SK-N-SH (cell line): ENCODE measurements at regions of chr20 and their contacts with region 1.

Region 1: DNA sequence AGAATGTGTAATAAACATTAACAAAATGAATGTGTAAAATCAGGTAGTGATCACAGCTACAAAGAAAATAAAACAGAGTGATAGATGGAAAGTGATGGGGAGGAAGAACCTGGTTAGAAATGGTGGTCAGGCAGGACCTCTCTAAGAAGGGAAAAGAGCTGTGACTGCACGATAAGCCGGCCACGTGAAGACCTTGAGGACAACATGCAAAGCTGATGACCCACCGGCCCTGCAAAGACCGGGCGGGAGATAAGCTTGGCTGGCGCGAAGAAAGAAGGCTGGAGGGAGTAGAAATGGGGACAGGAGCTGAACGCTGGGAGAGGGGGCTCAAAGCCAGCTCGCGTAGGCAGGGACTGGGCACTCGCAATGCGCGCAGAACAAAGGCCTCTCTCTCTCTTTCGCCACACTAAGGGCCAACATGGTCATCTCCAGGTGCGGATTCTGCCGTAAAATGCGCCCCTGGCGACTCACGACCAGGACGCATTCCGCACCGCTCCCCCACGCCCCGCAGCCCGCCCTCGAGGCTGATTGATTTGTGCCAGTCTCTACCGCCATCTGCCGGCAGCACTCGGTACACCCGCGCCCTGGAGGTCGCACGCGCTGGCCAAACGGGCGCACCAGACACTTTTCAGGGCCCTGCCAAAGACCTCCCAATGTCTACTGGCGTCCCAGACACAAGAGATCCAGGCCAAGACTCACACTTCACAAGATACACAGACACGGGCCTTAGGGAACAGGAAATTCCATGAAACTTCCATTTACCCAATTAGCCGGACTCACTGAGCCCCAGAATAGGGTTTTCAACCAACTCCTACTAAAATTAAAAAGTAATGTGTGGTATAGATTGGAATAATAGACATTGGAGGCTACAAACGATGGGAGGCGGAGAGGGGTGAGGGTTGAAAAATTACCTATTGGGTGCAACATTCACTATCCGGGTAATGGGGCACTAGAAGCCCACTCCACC is 9.4 kb downstream of the DEFB132 start:
- DNase-seq: peak; percentile 91
- H3K4me3 ChIP-seq: peak overlapping the region; percentile 47 to 57
- H3K27ac ChIP-seq: no peak overlapping the region
- H3K4me1 ChIP-seq: peaks cover 0 to 3% of the 10 kb centered on the region in 2 experiments; a peak in 1 of 4 replicates
- H3K27me3 ChIP-seq: no peaks in the 10 kb centered on the region
- CTCF ChIP-seq: peak; percentile 91
- EP300 ChIP-seq: no peak
- RAD21 ChIP-seq: peak; percentile 86

Region 2: GRCh38 chr20:60035-60918 is 206.6 kb before region 1 on chr20:
- CTCF ChIA-PET with region 1: no interaction called
- POLR2A ChIA-PET with region 1: no interaction called
- DNase-seq: no peak
- H3K4me3 ChIP-seq: no peak overlapping the region
- H3K27ac ChIP-seq: no peak overlapping the region
- H3K4me1 ChIP-seq: no peaks in the 10 kb centered on the region
- H3K27me3 ChIP-seq: no peaks in the 10 kb centered on the region
- CTCF ChIP-seq: no peak
- EP300 ChIP-seq: no peak
- RAD21 ChIP-seq: no peak

Region 3: GRCh38 chr20:208942-209566 is 57.8 kb before region 1 on chr20:
- CTCF ChIA-PET with region 1: interaction called, 30 read pairs
- POLR2A ChIA-PET with region 1: no interaction called
- DNase-seq: peak; percentile 41
- H3K4me3 ChIP-seq: no peak overlapping the region; a peak in 1 of 4 replicates
- H3K27ac ChIP-seq: no peak overlapping the region
- H3K4me1 ChIP-seq: no peaks in the 10 kb centered on the region
- H3K27me3 ChIP-seq: no peaks in the 10 kb centered on the region
- CTCF ChIP-seq: peak; percentile 69
- EP300 ChIP-seq: no peak
- RAD21 ChIP-seq: peak; percentile 83

Region 4: DNA sequence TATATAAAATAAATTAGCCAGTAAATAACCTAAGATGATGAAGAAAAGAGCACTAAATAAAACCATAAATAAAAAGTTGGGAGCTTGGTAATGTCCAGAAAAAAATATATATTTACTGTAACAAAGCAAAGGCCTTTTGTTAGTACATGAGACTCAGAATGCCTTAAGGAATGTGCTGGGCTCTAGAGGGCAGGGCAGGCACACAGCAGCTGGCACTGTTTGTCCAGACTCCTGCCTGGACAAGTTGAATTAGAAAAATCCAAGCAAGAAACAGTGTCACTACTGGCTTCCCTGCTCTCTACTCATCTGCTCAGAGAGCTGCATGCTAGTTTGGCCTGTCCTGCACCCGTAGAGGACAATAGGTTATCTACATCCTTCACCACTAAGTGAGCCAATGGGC is 31.0 kb before region 1 on chr20:
- CTCF ChIA-PET with region 1: interaction called, 16 read pairs
- POLR2A ChIA-PET with region 1: no interaction called
- DNase-seq: peak; percentile 17
- H3K4me3 ChIP-seq: no peak overlapping the region
- H3K27ac ChIP-seq: no peak overlapping the region
- H3K4me1 ChIP-seq: no peaks in the 10 kb centered on the region; a peak in 1 of 4 replicates
- H3K27me3 ChIP-seq: no peaks in the 10 kb centered on the region; the same call in 1 of the 2 replicates
- CTCF ChIP-seq: peak; percentile 38
- EP300 ChIP-seq: no peak
- RAD21 ChIP-seq: peak; percentile 72

Region 5: DNA sequence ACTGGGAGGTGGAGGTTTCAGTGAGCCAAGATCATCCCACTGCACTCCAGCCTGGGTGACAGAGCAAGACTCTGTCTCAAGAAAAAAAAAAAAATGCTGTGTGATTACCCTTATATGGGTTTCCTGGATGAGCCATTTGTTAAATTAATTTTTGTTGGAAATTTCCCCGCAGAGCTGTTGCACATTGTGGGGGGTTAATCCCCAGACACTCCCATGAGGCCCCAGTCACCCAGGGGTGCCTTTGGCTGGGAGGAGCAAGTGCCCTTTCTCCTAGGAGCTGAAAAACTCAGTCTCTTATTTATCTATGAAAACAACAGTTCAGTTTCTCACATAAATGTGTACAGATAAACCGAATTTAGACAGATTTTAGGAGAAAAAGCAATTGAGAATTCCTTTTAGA is 14.1 kb before region 1 on chr20:
- CTCF ChIA-PET with region 1: interaction called, 26 read pairs
- POLR2A ChIA-PET with region 1: no interaction called
- DNase-seq: no peak
- H3K4me3 ChIP-seq: no peak overlapping the region
- H3K27ac ChIP-seq: no peak overlapping the region
- H3K4me1 ChIP-seq: peaks cover 0 to 6% of the 10 kb centered on the region in 2 experiments; a peak in 1 of 4 replicates
- H3K27me3 ChIP-seq: peaks cover 8% of the 10 kb centered on the region; the same call in 1 of the 2 replicates
- CTCF ChIP-seq: no peak
- EP300 ChIP-seq: no peak
- RAD21 ChIP-seq: no peak